Activated CD4-positive, alpha-beta T cell treated with anti-CD3 and anti-CD28 coated beads for 36 hours (primary cell): ENCODE measurements at regions of chr1 and their contacts with region 1.

Region 1: DNA sequence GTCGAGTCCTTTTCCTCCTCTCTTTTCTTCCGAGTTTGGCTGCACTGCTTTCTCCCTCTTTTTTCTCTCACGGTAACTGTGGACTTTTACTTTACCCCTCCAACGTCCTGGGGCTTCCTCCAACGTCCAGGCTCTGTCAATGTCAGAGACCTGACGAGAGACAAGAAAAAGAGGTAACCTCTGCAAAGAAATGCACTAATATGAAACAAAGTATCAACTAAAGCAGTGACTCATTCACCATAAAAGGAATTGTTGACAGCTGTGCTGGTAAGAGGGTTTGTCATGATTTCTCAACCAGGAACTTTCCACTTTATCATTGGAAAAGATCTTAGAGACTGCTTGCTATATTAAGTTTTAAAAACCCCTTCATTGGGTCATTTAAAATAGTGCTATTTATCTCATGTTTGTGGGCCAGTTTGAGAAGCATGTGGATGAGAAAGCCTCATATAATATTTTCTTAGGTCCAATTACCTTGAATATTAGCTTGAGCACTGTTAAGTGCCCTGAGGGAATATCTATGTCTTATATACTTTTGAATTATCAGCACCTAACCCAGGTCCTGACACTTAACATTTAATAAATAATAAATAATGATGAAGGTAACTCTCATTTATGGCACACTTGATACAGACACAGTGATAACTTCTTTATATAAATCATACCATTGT is at the start of gene GBP2:
- DNase-seq: peak; percentile 50
- ATAC-seq: peak; percentile 77
- H3K4me3 Mint-ChIP-seq: peak within 1 kb of the TSS; percentile 87
- H3K27ac Mint-ChIP-seq: peak within 1 kb of the TSS; percentile 99
- H3K4me1 Mint-ChIP-seq: peaks cover 52% of the 10 kb centered on the region
- H3K27me3 Mint-ChIP-seq: no peaks in the 10 kb centered on the region
- total RNA-seq, gene GBP2: 253 to 294 TPM

Region 2: GRCh38 chr1:88891318-88891950 is 234.6 kb before region 1 on chr1 and contains the start of gene GTF2B:
- CTCF ChIA-PET with region 1: no interaction called
- POLR2A ChIA-PET with region 1: no interaction called
- intact Hi-C with region 1: loop called in 1 of 2 experiments (anchors 1 kb)
- DNase-seq: peak; percentile 96
- ATAC-seq: peak; percentile 87
- H3K4me3 Mint-ChIP-seq: peak within 1 kb of the TSS; percentile 88
- H3K27ac Mint-ChIP-seq: peak within 1 kb of the TSS; percentile 96
- H3K4me1 Mint-ChIP-seq: peaks cover 34% of the 10 kb centered on the region
- H3K27me3 Mint-ChIP-seq: no peaks in the 10 kb centered on the region
- total RNA-seq, gene GTF2B: 34.3 to 38.1 TPM

Region 3: DNA sequence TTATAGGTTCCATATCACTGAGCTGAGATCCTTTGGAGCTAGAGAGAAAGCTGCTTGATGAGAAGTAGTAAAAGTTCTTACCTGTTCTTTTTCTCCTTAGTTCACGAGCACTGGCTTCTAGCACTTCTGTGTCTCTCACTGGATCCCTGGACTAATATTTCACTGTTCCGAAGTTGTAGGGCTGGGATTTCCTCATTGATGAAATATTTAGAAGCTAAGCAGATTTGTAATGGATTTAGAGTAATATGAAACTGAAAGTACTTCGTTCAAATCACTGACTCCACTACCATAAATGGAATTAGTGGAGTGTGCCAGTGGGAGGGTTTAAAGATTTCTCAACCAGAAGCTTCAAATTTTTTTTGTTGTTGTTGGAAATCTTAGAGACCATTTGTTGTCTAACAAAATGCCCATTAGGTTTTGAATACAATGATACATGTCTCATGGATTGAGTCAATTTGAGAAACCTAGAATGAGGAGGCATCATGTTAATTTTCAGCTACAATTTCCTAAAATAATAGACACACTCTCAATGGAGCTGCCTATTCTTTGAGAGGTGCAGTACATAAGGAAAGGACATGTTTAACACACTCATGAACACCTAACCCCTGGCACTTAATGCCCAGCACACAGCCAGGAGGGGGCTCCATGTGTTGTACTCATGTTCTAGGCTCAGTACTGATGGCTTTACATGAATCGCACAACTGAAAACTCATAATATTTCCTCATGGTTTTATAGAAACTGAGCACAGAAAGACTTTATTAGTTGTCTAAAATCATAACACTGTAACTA is 60.8 kb before region 1 on chr1 and contains the start of gene GBP1:
- CTCF ChIA-PET with region 1: interaction called, 3 read pairs
- POLR2A ChIA-PET with region 1: no interaction called
- intact Hi-C with region 1: loop called (anchors 1 to 2 kb)
- DNase-seq: peak; percentile 24
- ATAC-seq: peak; percentile 77
- H3K4me3 Mint-ChIP-seq: peak within 1 kb of the TSS; percentile 78
- H3K27ac Mint-ChIP-seq: peak within 1 kb of the TSS; percentile 93
- H3K4me1 Mint-ChIP-seq: peaks cover 58% of the 10 kb centered on the region
- H3K27me3 Mint-ChIP-seq: no peaks in the 10 kb centered on the region
- total RNA-seq, gene GBP1: 67.6 to 79.9 TPM

Region 4: GRCh38 chr1:89198491-89199072 is 72.5 kb after region 1 on chr1 and contains the start of gene GBP4:
- CTCF ChIA-PET with region 1: interaction called, 3 read pairs
- POLR2A ChIA-PET with region 1: interaction called, 28 read pairs
- intact Hi-C with region 1: loop called (anchors 1 kb)
- DNase-seq: peak; percentile 63
- ATAC-seq: peak; percentile 67
- H3K4me3 Mint-ChIP-seq: peak within 1 kb of the TSS; percentile 83
- H3K27ac Mint-ChIP-seq: peak within 1 kb of the TSS; percentile 98
- H3K4me1 Mint-ChIP-seq: peaks cover 73% of the 10 kb centered on the region
- H3K27me3 Mint-ChIP-seq: no peaks in the 10 kb centered on the region
- total RNA-seq, gene GBP4: 30.8 to 34.4 TPM

Region 5: DNA sequence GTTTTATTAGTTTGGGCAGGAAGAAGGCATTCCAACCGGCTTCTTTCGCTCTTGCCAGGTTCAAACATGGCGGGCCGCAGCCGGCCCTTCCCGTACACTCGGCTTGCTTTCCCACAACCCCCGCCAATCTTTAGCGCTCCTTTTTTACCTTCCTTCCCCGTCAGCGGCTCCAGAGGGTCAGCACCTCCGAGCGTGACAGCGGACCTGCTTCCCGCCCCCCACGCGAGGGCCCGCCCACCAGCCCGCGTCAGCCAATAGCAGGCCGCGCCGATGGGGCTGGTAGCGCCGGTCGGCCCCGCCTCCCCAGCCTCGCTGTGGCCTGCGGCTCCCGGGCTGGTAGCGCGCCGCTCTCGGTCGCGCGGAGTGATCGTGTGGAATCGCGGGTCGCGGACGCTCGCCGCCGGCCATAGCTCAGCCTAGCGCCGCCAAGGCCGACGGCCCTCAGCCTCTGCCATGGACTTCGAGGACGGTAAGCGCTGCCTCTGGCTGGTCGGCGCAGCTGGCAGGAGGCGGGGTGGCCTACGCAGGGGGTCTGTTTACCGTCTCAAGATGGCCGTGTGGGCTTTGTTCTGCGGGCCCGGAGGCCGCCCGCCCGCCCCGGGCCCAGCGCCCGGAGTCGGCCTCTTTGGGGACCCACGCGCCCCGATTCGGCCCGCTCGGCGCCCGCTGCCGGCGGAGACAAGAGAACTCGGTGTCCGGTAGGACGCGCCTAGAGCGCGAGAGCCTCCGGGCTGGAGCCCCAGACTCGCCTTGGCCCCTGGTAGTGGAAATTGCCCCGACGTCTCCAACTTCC is 869.0 kb after region 1 on chr1 and contains the start of gene ZNF326:
- CTCF ChIA-PET with region 1: no interaction called
- POLR2A ChIA-PET with region 1: no interaction called
- intact Hi-C with region 1: loop called in 1 of 2 experiments (anchors 2 kb)
- DNase-seq: peak; percentile 97
- ATAC-seq: peak; percentile 95
- H3K4me3 Mint-ChIP-seq: peak within 1 kb of the TSS; percentile 94
- H3K27ac Mint-ChIP-seq: peak within 1 kb of the TSS; percentile 92
- H3K4me1 Mint-ChIP-seq: peaks cover 42% of the 10 kb centered on the region
- H3K27me3 Mint-ChIP-seq: no peaks in the 10 kb centered on the region
- total RNA-seq, gene ZNF326: 19.4 to 20.5 TPM